ENCODE measurements at regions of chr2 and their contacts with region 1.

Region 1: DNA sequence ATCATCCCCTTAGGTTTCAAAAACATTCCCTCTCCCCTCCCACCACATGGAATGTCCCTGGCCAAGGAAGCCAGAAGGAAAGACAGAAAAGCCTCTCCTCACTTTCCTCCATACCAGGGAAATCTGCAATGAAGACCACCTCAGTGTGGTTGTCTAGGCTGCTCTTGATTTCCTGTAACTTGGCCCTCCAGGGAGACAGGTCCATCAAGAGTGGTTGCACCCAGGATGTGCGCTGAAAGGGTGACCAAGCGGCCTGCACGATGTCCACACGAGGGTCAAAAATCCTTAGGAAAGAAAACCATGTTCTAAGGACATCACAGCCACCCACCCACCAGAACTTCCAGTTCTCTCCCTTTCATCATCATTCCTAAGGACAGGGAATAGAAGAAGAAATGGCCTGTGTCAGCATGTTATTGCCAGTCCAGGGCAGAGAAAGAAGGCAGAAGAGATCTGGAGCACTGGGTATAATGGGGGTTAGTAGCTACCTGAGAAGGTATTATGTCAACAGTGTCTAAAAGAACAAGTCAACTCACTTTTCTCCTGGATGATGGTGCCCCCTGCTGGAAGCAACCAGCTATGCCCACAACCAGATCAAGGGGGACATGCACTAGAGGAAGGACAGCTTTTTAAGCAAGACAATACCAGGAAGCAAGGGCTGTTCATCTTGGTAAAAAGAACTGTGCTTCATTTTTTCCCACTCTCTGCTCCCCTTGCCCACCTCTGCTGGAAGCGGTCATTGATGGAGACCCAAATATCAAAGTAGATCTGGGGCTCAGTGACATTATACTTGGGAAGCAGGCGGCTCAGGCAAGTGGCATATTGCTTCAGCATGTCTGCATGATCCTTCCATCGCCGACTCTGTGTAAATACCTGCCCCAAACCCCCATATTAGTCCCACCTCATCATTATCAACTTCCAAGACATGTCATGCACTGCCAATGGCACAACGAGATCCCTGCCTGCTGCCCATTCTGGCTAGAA is 9.3 kb downstream of the GGCX start:
- DNase-seq: peak; percentile 56
- ATAC-seq: peak; percentile 91
- H3K4me3 ChIP-seq: no peak overlapping the region
- H3K27ac ChIP-seq: no peak overlapping the region
- H3K4me1 ChIP-seq: no peaks in the 10 kb centered on the region
- H3K27me3 ChIP-seq: no peaks in the 10 kb centered on the region
- CTCF ChIP-seq: peak; percentile 84 to 93 (median 92)
- EP300 ChIP-seq: no peak
- POLR2A ChIP-seq: no peak
- RAD21 ChIP-seq: peak; percentile 95

Region 2: DNA sequence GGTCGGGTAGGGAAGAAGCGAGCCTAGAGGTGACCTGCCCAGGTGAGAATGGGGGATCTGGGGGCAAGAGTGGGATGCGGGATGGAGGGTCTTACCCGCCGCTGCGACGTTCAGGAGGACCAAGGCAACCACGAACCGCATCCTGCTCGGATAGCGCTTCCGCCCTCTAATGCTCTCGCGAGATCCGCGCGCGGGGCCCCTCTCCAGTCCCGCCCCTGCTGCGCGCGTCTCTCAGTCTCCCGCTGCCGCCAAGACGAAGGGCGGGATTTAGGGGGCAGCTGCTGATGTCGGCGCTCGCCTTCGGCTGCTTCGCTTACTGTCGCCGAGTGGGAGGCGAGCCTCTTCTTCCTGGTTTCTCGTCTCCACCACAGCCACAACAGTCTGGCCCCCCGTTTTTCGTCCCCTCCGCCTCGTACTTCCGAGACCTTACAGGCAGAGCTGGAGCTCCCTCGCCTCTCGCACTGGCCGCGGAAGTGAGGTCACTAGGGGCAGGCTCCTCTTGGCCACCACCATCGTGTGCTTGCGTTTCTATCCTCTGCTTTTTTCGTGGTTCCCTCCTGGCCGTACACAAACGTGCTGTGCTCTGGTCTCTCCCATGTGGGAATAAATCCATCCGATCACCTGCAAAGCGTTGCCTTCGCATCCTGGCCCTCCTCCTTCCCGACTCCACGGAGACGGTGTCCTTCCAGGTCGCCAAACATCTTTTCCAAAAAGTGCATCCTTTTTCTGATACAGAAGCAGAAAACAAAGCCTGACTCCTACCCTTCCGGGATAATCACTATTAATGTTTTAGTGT is 224.0 kb before region 1 on chr2 and contains the start of gene TGOLN2:
- CTCF ChIA-PET with region 1: interaction called, 3 read pairs
- POLR2A ChIA-PET with region 1: no interaction called
- RAD21 ChIA-PET with region 1: no interaction called
- SMC1A ChIA-PET with region 1: interaction called, 3 read pairs
- in situ Hi-C with region 1: no loop called
- intact Hi-C with region 1: loop called (anchors 5 kb)
- DNase-seq: peak; percentile 73
- ATAC-seq: peak; percentile 90
- H3K4me3 ChIP-seq: peak within 1 kb of the TSS; percentile 98
- H3K27ac ChIP-seq: peak within 1 kb of the TSS; percentile 99
- H3K4me1 ChIP-seq: peaks cover 20% of the 10 kb centered on the region
- H3K27me3 ChIP-seq: no peaks in the 10 kb centered on the region
- CTCF ChIP-seq: no peak
- EP300 ChIP-seq: peak in 1 of 2 experiments; percentile 13; a peak in 1 of 4 replicates
- POLR2A ChIP-seq: peak; percentile 98
- RAD21 ChIP-seq: no peak
- polyA plus RNA-seq, gene TGOLN2: 13.8 to 21.6 TPM

Region 3: DNA sequence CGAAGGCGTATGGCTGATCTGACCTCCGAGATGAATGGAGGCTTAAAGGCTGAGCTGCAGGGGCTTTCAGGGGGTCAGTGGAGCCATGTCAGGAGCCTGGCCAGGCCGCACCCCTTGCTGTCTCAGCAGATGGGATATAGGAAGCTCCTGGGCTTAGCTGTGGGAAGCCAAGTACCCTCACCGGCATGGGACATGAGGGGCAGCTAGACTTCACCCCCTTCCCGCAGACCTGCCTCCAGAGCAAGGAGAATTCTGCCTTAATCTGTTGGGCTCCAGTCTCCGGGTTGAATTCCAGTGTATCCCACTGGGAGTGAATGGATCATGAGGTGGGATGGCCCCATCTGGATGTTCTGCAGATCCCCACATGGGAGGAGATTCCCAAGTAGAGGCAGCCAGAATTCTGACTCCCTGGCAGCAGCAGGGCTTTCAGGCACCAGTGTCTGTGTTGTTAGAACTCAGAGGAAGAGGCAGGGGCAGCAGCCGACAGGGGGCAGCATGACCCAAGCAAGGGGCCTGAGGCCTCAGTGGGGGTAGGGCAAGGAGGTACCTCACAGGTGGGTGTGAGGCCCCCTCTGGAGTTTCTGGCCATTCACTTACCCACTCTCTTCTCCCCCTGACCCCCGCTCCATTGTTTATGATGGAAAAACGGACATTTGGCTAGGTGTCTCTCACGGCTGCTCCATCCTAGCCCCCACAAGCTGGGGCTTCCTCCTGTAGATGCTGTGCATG is 160.9 kb before region 1 on chr2:
- CTCF ChIA-PET with region 1: interaction called, 104 read pairs
- POLR2A ChIA-PET with region 1: interaction called, 4 read pairs
- RAD21 ChIA-PET with region 1: interaction called, 60 read pairs
- SMC1A ChIA-PET with region 1: interaction called, 56 read pairs
- in situ Hi-C with region 1: no loop called
- intact Hi-C with region 1: loop called (anchors 1 kb)
- DNase-seq: no peak
- ATAC-seq: peak; percentile 81
- H3K4me3 ChIP-seq: no peak overlapping the region
- H3K27ac ChIP-seq: no peak overlapping the region
- H3K4me1 ChIP-seq: peaks cover 7% of the 10 kb centered on the region
- H3K27me3 ChIP-seq: no peaks in the 10 kb centered on the region
- CTCF ChIP-seq: peak; percentile 74 to 89 (median 76)
- EP300 ChIP-seq: no peak
- POLR2A ChIP-seq: no peak
- RAD21 ChIP-seq: peak; percentile 89

Region 4: GRCh38 chr2:85409845-85410583 is 142.0 kb before region 1 on chr2 and contains the start of gene CAPG:
- CTCF ChIA-PET with region 1: interaction called, 12 read pairs
- POLR2A ChIA-PET with region 1: interaction called, 3 read pairs
- RAD21 ChIA-PET with region 1: interaction called, 3 read pairs
- SMC1A ChIA-PET with region 1: no interaction called
- in situ Hi-C with region 1: no loop called
- intact Hi-C with region 1: no loop called
- DNase-seq: no peak
- ATAC-seq: peak; percentile 90
- H3K4me3 ChIP-seq: peak within 1 kb of the TSS; percentile 64; the same call in 1 of the 2 replicates
- H3K27ac ChIP-seq: peak within 1 kb of the TSS; percentile 55
- H3K4me1 ChIP-seq: peaks cover 26% of the 10 kb centered on the region
- H3K27me3 ChIP-seq: no peaks in the 10 kb centered on the region
- CTCF ChIP-seq: no peak
- EP300 ChIP-seq: no peak
- POLR2A ChIP-seq: no peak
- RAD21 ChIP-seq: no peak
- polyA plus RNA-seq, gene CAPG: 26.3 to 65.6 TPM

Region 5: DNA sequence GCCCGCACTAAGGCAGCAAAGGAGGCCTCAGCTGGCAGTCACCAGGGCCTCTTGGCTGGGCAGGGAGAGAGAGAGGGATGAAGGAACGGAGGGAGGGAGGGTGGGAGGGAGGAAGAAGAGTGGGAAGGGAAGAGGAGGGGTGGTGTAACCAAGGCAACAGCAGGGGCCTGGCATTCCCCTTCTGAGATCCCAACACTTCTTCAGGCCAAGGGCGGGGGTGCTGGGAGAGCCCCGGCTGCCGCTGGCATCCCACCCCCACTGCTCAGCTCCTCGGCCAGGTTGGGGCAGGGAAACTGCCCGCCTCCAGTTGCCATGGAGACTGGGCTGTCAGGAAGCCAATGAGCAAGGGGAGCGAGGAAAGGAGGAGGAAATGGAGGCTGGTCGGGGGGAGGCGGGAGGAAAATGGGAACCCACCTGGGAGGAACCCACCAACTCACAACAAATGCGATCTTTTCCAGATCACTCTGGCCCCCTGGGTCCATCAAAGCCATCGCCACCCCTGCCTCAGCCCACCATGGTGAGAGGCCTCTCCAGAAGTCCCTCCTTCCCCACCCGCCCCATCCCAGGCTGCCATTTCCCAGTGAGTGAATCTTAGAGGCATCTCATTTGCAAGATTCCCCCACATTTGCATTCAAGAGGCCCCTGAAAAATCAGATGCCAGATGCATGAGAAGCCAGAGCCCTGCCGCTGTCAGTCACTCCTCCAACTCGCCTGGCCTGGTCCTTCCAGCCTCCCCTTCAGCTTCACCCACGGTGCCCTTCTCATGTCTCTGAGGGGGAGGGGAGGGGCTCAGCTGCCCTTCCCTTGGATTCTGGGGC is 121.0 kb before region 1 on chr2:
- CTCF ChIA-PET with region 1: interaction called, 9 read pairs
- POLR2A ChIA-PET with region 1: interaction called, 3 read pairs
- RAD21 ChIA-PET with region 1: interaction called, 13 read pairs
- SMC1A ChIA-PET with region 1: interaction called, 22 read pairs
- in situ Hi-C with region 1: no loop called
- intact Hi-C with region 1: no loop called
- DNase-seq: no peak
- ATAC-seq: no peak
- H3K4me3 ChIP-seq: no peak overlapping the region
- H3K27ac ChIP-seq: no peak overlapping the region
- H3K4me1 ChIP-seq: no peaks in the 10 kb centered on the region
- H3K27me3 ChIP-seq: no peaks in the 10 kb centered on the region
- CTCF ChIP-seq: no peak
- EP300 ChIP-seq: no peak
- POLR2A ChIP-seq: no peak
- RAD21 ChIP-seq: no peak

Region 6: GRCh38 chr2:85538486-85539360 is 13.3 kb before region 1 on chr2 and contains the start of gene MAT2A:
- CTCF ChIA-PET with region 1: interaction called, 134 read pairs
- POLR2A ChIA-PET with region 1: interaction called, 14 read pairs
- RAD21 ChIA-PET with region 1: interaction called, 43 read pairs
- SMC1A ChIA-PET with region 1: interaction called, 86 read pairs
- in situ Hi-C with region 1: no loop called
- intact Hi-C with region 1: no loop called
- DNase-seq: peak; percentile 56
- ATAC-seq: peak; percentile 81
- H3K4me3 ChIP-seq: peak within 1 kb of the TSS; percentile 86
- H3K27ac ChIP-seq: peak within 1 kb of the TSS; percentile 100
- H3K4me1 ChIP-seq: no peaks in the 10 kb centered on the region
- H3K27me3 ChIP-seq: no peaks in the 10 kb centered on the region
- CTCF ChIP-seq: peak; percentile 65 to 77 (median 74)
- EP300 ChIP-seq: no peak
- POLR2A ChIP-seq: peak; percentile 82
- RAD21 ChIP-seq: no peak
- polyA plus RNA-seq, gene MAT2A: 97.6 to 127 TPM

Region 7: DNA sequence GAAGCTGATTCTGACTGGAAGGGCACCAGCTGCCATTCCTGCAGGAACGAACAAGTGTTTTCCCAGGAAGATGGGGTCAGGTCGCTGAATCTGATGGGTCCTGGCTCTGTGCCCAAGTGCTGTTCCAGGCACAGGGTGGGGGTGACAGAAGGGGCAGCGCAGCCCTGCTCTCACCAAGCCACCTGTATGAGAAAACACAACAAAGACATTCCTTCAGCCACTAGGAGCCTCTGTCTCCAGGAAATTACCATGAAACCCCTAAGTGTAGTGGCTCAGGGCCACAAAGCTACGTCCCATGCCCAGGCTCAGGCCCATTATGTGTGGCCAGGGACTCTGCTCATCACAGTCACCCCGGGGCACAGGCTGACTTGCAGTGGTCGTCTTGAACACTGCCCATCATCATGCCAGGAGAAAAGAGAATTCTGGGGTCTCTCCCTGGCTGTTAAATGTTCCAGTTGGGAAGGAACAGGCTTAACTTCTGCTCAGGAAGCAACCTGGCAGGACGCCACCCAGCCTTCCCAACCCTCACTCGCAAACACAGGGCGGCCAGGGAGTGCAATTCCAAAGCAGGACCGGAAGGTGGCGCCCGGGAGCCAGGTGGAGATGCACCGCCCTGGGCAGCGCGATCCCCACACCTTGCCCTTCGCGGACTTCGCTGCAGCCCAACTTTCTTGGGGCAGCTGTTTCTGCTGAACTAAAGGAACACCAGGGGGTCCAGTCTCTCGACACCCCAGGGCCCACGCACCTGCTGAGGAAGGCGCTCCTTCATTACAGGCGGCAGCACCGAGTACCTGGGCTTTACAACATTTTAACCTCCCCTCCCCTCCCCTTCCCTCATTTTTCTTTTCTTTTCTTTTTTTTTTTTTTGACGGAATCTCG is 127.0 kb after region 1 on chr2:
- CTCF ChIA-PET with region 1: no interaction called
- POLR2A ChIA-PET with region 1: no interaction called
- RAD21 ChIA-PET with region 1: no interaction called
- SMC1A ChIA-PET with region 1: no interaction called
- in situ Hi-C with region 1: no loop called
- intact Hi-C with region 1: no loop called
- DNase-seq: no peak
- ATAC-seq: peak; percentile 99
- H3K4me3 ChIP-seq: no peak overlapping the region
- H3K27ac ChIP-seq: no peak overlapping the region
- H3K4me1 ChIP-seq: no peaks in the 10 kb centered on the region
- H3K27me3 ChIP-seq: no peaks in the 10 kb centered on the region
- CTCF ChIP-seq: peak; percentile 96 to 99 (median 99)
- EP300 ChIP-seq: no peak
- POLR2A ChIP-seq: no peak
- RAD21 ChIP-seq: peak; percentile 89